ENCODE measurements at regions of chr13 and their contacts with region 1.

Region 1: GRCh38 chr13:23673354-23673753 is 103.1 kb downstream of the TNFRSF19 start:
- DNase-seq: peak; percentile 95
- H3K4me3 ChIP-seq: no peak overlapping the region
- H3K27ac ChIP-seq: peak overlapping the region; percentile 96
- H3K27me3 ChIP-seq: no peaks in the 10 kb centered on the region
- CTCF ChIP-seq: no peak

Region 2: GRCh38 chr13:23776698-23777574 is 103.6 kb after region 1 on chr13:
- CTCF ChIA-PET with region 1: no interaction called
- POLR2A ChIA-PET with region 1: interaction called, 14 read pairs
- DNase-seq: no peak
- H3K4me3 ChIP-seq: no peak overlapping the region
- H3K27ac ChIP-seq: no peak overlapping the region
- H3K27me3 ChIP-seq: no peaks in the 10 kb centered on the region
- CTCF ChIP-seq: no peak

Region 3: DNA sequence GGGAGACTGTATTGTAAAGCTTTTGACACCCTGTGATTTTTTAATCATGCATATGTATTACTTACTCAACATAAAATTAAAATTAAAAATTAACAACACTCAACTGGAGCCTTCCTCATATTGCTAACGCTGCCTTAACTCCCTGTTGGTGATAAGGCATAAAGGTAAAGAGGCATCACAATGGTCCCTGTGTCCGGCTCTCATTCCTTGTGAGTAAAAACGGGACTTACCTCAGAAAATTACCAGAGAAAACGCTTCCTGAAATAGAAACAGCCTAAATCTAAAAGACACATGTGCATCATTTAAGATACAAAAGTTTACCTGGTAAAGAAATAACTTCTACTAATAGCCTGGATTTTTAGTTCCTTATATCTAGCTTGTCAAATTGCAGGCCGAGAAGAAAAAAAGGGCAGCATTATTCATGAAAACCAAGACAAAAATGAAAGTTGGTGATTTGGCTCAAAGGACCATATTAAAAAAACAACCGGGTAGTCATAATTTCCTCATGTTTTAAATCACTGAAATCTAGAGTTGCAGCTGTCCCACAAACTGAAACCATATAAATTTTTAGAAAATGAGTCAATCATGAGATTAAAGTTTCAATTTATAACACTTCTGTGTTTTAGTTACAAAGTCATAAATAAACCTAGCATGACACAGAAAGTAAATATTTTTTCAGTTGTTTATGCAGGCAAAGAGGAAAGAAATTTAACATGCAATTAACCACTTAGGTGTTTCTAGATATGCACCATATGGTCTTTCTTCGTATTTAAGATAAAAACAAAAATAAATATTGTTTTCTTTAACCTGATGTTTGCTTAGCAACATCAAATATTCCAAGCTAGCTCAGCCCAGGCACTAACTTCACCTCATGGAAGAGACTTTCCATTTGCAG is 121.2 kb after region 1 on chr13:
- CTCF ChIA-PET with region 1: no interaction called
- POLR2A ChIA-PET with region 1: interaction called, 17 read pairs
- DNase-seq: peak; percentile 68
- H3K4me3 ChIP-seq: no peak overlapping the region
- H3K27ac ChIP-seq: peak overlapping the region; percentile 63
- H3K27me3 ChIP-seq: no peaks in the 10 kb centered on the region
- CTCF ChIP-seq: no peak

Region 4: GRCh38 chr13:24574847-24575246 is 901.5 kb after region 1 on chr13:
- CTCF ChIA-PET with region 1: no interaction called
- POLR2A ChIA-PET with region 1: no interaction called
- DNase-seq: no peak
- H3K4me3 ChIP-seq: no peak overlapping the region
- H3K27ac ChIP-seq: no peak overlapping the region
- H3K27me3 ChIP-seq: no peaks in the 10 kb centered on the region
- CTCF ChIP-seq: no peak